ENCODE measurements at regions of chr5 and their contacts with region 1.

Region 1: DNA sequence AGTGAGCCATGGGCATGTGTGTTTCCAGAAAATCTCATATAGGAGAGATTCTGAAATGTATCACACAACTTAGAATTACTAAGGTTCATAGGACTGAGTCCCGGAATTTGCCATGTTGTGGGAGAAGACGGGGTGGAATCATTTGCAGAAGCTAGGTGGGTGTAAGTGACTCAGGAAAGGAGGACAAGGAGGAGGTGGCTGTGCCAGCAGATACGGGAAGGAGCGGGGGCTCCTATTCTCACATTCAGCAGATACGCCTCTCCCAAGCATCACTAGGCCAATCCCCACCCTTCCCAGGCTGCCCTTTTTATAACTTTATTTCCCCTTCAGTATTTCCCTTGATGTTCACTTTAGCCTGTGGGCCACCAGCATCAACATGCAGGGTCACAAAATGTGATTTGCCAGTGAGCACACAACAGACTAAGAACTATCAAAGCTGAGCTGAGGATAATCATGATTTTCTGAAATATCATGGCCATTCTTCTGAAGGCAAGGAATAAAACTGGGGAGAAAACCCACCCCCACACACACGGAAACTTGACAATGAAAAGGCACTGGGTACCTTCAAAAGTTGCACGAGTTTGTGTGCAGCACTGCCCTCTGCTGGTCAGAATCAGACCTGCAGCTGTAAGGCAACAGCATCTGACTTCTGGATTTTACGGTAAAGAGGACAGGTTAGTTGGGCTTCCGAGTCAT is 133.2 kb downstream of the MTX3 start:
- DNase-seq: no peak
- H3K4me3 ChIP-seq: no peak overlapping the region
- H3K27ac ChIP-seq: no peak overlapping the region
- H3K4me1 ChIP-seq: no peaks in the 10 kb centered on the region
- H3K27me3 ChIP-seq: no peaks in the 10 kb centered on the region
- CTCF ChIP-seq: peak; percentile 90 to 97 (median 95)
- EP300 ChIP-seq: no peak
- POLR2A ChIP-seq: no peak

Region 2: GRCh38 chr5:79702606-79703382 is 155.1 kb before region 1 on chr5:
- intact Hi-C with region 1: loop called (anchors 5 kb)
- DNase-seq: no peak
- H3K4me3 ChIP-seq: no peak overlapping the region
- H3K27ac ChIP-seq: no peak overlapping the region
- H3K4me1 ChIP-seq: peaks cover 0 to 1% (median 0%) of the 10 kb centered on the region in 4 donors
- H3K27me3 ChIP-seq: no peaks in the 10 kb centered on the region
- CTCF ChIP-seq: peak in 1 of 3 experiments; percentile 35
- EP300 ChIP-seq: no peak
- POLR2A ChIP-seq: no peak

Region 3: DNA sequence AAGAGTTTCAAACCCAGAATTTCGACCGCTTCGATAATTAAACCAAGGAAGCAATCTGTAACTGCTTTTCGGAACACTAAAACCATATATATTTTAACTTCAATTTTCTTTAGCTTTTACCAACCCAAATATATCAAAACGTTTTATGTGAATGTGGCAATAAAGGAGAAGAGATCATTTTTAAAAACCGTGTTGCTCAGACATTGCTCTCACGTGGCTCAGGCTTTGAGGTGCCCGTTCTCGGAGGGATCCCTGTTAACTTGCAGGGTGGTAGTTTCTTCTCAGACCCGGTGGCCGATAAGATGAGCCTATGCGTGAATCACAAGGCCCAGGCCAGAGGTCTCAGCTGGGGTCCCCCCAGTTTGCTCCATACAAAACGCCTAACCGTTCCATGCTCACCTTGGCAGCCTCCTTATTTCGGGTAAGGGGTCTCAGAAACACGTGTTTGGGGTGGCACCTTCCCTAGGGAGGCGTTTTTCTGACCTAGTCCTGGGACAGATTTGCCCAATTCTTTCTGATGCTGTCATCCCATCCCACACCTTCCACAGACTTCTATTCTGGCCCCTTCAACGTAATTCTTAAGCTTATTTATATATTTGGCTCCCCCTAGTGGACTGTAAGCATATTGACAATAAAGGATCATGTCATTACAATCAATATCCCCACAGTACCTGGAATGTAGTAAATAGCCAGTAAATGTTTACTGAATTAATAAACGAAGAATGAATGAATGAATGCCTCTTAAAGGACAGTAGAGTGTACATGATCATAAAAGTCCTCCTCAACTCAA is 225.4 kb after region 1 on chr5:
- intact Hi-C with region 1: loop called (anchors 10 kb)
- DNase-seq: no peak
- H3K4me3 ChIP-seq: peak overlapping the region; percentile 22 to 51 (median 28)
- H3K27ac ChIP-seq: peak overlapping the region; percentile 52 to 68 (median 64)
- H3K4me1 ChIP-seq: peaks cover 6 to 16% (median 13%) of the 10 kb centered on the region in 4 donors
- H3K27me3 ChIP-seq: no peaks in the 10 kb centered on the region
- CTCF ChIP-seq: peak; percentile 70 to 75 (median 70)
- EP300 ChIP-seq: no peak
- POLR2A ChIP-seq: no peak

Measured in esophagus muscularis mucosa (tissue), 4 donors.